GM10248 (cell line): ENCODE measurements at regions of chrX and their contacts with region 1.

Region 1: GRCh38 chrX:65581661-65582339 is 47.2 kb upstream of the LAS1L start:
- DNase-seq: peak; percentile 56
- CTCF ChIP-seq: peak; percentile 52

Region 2: DNA sequence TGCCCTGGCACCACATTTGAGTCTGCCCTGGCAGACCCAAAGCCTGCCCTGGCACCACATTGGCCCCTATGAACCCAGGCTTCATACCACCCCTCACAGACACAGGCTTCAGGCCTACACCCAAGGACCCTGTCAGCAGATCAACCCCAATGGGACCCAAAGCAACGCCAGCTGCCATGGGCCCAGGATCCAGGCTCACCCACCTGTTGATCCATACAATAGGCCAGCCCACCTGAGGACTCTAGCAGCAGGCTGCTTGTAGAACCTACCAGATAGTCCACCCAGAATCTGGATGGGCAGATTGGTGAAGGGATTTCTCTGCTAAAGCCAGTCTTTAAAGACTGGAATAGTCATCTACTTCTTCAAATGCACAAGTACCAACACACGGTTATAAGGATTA is 161.6 kb before region 1 on chrX:
- CTCF ChIA-PET with region 1: no interaction called
- POLR2A ChIA-PET with region 1: no interaction called
- DNase-seq: no peak
- CTCF ChIP-seq: no peak

Region 3: DNA sequence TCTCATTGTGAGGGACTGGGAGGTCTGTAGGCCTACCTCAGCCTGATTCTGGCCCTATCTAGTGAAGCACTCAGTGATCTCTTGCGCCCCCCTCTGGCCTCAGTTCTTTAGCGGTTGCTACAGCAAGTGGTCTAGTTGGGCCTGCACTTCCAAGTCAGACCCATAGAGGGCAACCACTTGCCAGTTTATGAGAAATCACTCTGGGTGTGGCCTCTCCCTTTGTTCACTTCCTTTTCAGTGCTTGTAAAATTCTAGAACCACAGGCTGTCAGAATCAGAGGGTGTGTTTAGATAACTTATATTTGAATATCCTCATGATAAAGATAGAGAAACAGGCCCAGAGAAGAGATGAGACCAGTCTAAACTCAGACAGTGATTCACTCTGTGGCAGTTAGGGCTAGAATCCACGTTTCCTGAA is 13.7 kb after region 1 on chrX:
- CTCF ChIA-PET with region 1: interaction called, 12 read pairs
- POLR2A ChIA-PET with region 1: no interaction called
- DNase-seq: peak; percentile 69
- CTCF ChIP-seq: peak; percentile 93

Region 4: GRCh38 chrX:65723706-65724105 is 141.9 kb after region 1 on chrX:
- CTCF ChIA-PET with region 1: no interaction called
- POLR2A ChIA-PET with region 1: no interaction called
- DNase-seq: peak; percentile 25
- CTCF ChIP-seq: no peak

Region 5: GRCh38 chrX:65811558-65812228 is 229.9 kb after region 1 on chrX:
- CTCF ChIA-PET with region 1: no interaction called
- POLR2A ChIA-PET with region 1: no interaction called
- DNase-seq: no peak
- CTCF ChIP-seq: no peak

Region 6: DNA sequence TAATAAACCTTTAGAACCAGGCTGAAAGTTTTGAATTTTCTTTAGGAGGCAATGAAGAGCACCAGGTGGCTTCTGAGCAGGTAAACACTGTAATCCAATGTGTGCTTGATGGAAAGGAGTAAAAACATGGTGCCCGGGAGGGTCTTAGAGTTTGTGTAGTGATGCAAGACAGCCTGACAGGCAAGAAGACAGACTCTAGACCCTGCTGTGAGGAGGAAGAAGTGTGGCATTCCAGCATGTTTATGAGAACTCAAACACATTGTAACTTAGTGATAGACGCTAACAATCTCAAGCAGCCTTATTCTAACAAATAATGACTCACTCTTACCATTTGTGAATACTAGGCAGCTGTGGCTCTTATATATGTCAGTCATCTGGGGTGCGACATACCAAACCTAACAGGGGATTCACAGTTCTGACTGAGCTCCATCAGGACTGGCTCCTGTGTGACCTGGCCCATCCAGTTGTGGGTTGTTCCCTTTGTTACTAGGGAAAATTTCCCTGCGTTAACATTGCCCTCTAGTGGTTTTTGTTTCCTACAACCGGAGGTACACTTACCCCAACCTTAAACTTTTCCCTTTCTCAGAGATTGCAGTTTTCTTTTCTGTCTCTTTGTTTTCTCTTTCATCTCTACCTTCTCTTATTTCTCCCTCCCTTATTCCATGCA is 404.3 kb after region 1 on chrX:
- CTCF ChIA-PET with region 1: interaction called, 11 read pairs
- POLR2A ChIA-PET with region 1: no interaction called
- DNase-seq: peak; percentile 28
- CTCF ChIP-seq: peak; percentile 17

Region 7: DNA sequence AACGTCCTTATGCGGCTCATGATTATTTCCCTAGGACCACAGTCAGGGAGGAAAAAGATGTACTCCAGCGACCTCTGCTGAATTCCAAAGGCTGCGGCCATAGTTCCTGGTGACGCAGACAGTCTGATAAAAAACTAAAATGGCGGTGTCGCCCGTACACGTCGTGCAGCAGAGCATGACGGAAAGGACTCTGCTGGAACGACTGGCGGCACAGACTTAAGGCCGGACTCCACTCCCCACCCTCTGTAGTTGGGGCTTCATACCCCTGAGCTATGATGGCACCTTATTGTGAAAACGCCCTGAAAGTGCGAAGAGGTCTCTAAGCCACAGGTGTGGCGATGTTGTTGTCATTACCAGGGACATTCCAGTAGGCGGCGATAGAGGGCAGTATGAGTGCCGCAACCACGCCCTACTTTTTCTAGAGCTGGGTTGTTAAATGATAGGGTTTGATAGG is 1147.0 kb after region 1 on chrX:
- CTCF ChIA-PET with region 1: interaction called, 11 read pairs
- POLR2A ChIA-PET with region 1: no interaction called
- DNase-seq: peak; percentile 21
- CTCF ChIP-seq: peak; percentile 33